ENCODE measurements at regions of chr2 and their contacts with region 1.

Region 1: GRCh38 chr2:30165050-30165520 is 18.3 kb downstream of the YPEL5 start:
- DNase-seq: peak; percentile 93
- ATAC-seq: peak; percentile 96
- H3K4me3 ChIP-seq: no peak overlapping the region
- H3K27ac ChIP-seq: no peak overlapping the region
- H3K4me1 ChIP-seq: peaks cover 3% of the 10 kb centered on the region; the same call in 1 of the 2 replicates
- H3K27me3 ChIP-seq: no peaks in the 10 kb centered on the region
- CTCF ChIP-seq: peak; percentile 98
- POLR2A ChIP-seq: peak; percentile 43; the same call in 1 of the 2 replicates
- RAD21 ChIP-seq: peak; percentile 84

Region 2: DNA sequence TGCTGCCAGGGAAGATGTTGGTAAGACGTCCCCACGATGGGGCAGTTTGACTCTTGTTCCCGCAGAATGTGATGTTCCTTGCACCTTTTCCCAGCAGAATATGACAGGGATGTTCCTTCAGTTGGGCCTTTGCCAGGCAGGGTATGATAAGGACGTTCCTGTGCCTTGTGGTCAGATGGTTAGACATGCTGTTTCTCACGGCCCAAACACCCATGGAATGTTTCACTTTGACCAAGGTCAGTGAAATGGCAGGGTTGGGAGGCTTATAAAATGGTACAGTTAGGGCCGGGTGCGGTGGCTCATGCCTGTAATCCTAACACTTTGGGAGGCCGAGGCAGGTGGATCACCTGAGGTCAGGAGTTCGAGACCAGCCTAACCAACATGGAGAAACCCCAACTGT is 58.5 kb before region 1 on chr2:
- CTCF ChIA-PET with region 1: no interaction called
- POLR2A ChIA-PET with region 1: no interaction called
- dilution Hi-C with region 1: no loop called
- in situ Hi-C with region 1: no loop called
- intact Hi-C with region 1: no loop called
- DNase-seq: peak; percentile 47
- ATAC-seq: no peak
- H3K4me3 ChIP-seq: no peak overlapping the region
- H3K27ac ChIP-seq: no peak overlapping the region
- H3K4me1 ChIP-seq: peaks cover 3% of the 10 kb centered on the region; the same call in 1 of the 2 replicates
- H3K27me3 ChIP-seq: no peaks in the 10 kb centered on the region; the same call in 1 of the 2 replicates
- CTCF ChIP-seq: no peak
- POLR2A ChIP-seq: no peak
- RAD21 ChIP-seq: no peak

Region 3: DNA sequence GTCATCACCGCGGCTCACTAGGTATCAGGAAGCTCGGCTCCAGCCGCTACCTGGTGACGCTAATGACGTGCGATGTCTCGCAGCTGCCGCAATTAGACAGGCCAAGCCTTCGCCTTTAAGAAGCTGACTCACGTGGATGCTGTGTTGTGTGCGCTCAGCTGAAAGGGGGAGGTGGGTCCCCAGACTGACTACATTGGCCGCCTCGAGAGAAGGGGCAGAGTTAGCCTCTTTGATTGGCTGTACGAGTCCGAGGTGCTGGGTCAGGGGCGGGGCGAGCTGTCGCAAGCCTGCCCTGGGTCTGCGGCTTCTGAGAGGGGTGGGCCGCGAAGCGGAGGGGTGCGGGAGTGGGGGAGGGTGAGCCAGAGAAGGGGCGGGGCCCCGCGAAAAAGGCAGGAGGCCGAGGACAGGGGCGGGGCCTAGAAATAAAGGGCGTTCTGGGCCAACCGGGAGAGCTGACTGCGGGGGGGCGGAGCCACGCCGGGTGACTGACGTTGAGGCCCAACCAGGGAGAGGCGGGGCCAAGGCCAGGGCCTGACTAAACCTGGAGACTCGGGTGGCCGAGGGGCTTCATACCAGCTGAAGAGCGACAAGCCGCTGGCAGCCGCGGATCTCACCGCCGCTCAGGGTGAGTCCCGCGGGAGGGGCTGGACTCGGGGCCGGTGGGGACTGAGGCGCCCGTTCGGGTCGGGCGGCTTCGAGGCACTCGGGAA is 18.5 kb before region 1 on chr2 and contains the start of gene YPEL5:
- CTCF ChIA-PET with region 1: interaction called, 51 read pairs
- POLR2A ChIA-PET with region 1: no interaction called
- dilution Hi-C with region 1: no loop called
- in situ Hi-C with region 1: no loop called
- intact Hi-C with region 1: no loop called
- DNase-seq: peak; percentile 99
- ATAC-seq: peak; percentile 93
- H3K4me3 ChIP-seq: peak within 1 kb of the TSS; percentile 67
- H3K27ac ChIP-seq: peak within 1 kb of the TSS; percentile 91
- H3K4me1 ChIP-seq: peaks cover 7% of the 10 kb centered on the region
- H3K27me3 ChIP-seq: no peaks in the 10 kb centered on the region
- CTCF ChIP-seq: no peak
- POLR2A ChIP-seq: peak; percentile 96
- RAD21 ChIP-seq: no peak
- total RNA-seq, gene YPEL5: 40.7 and 54.7 TPM in 2 replicates

Region 4: GRCh38 chr2:30208452-30208851 is 43.4 kb after region 1 on chr2:
- CTCF ChIA-PET with region 1: interaction called, 14 read pairs
- POLR2A ChIA-PET with region 1: no interaction called
- dilution Hi-C with region 1: no loop called
- in situ Hi-C with region 1: no loop called
- intact Hi-C with region 1: no loop called
- DNase-seq: peak; percentile 82
- ATAC-seq: peak; percentile 99
- H3K4me3 ChIP-seq: no peak overlapping the region
- H3K27ac ChIP-seq: no peak overlapping the region
- H3K4me1 ChIP-seq: peaks cover 2% of the 10 kb centered on the region; the same call in 1 of the 2 replicates
- H3K27me3 ChIP-seq: 0 out of 2 replicates have a peak, but pooled peaks cover 3% of the 10 kb centered on the region
- CTCF ChIP-seq: peak; percentile 95
- POLR2A ChIP-seq: peak; percentile 63
- RAD21 ChIP-seq: peak; percentile 98

Region 5: GRCh38 chr2:30691948-30692828 is 527.1 kb after region 1 on chr2:
- CTCF ChIA-PET with region 1: interaction called, 11 read pairs
- POLR2A ChIA-PET with region 1: no interaction called
- dilution Hi-C with region 1: no loop called
- in situ Hi-C with region 1: no loop called
- intact Hi-C with region 1: no loop called
- DNase-seq: peak; percentile 37
- ATAC-seq: peak; percentile 84
- H3K4me3 ChIP-seq: no peak overlapping the region
- H3K27ac ChIP-seq: no peak overlapping the region
- H3K4me1 ChIP-seq: peaks cover 18% of the 10 kb centered on the region
- H3K27me3 ChIP-seq: no peaks in the 10 kb centered on the region
- CTCF ChIP-seq: peak; percentile 42; the same call in 1 of the 2 replicates
- POLR2A ChIP-seq: no peak
- RAD21 ChIP-seq: peak; percentile 48

Region 6: DNA sequence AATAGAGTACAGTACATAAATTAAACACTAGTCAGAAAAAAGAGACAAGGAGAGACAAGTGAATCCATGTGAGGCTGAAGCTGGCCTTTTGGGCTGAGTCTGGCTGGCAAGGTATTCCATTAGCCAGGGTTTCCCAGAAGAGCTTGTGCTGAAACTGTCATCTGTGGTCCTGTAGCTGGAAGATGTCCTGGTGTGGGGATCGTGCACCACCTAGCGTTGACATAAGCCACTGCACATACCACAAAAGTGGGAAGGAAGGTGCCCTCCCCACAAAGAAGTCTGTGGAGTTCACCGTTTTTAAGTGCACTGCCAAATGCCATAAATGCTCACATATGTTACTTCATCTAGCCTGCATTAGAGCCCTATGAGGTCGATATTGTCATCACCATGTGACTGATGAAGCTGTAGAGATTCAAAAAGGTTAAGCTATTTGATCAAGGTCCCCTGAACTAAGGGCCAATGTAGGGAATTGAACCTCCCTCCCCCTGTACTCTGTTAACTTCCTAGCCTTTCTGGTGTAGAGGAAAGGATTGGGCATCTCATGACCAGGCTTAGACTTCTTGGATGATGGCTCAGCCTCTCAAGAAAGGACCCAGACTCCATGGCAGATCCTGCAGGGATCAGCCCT is 1005.1 kb after region 1 on chr2:
- CTCF ChIA-PET with region 1: interaction called, 4 read pairs
- POLR2A ChIA-PET with region 1: no interaction called
- dilution Hi-C with region 1: no loop called
- in situ Hi-C with region 1: loop called (anchors 25 kb)
- intact Hi-C with region 1: loop called (anchors 10 kb)
- DNase-seq: peak; percentile 60
- ATAC-seq: peak; percentile 98
- H3K4me3 ChIP-seq: no peak overlapping the region
- H3K27ac ChIP-seq: no peak overlapping the region
- H3K4me1 ChIP-seq: no peaks in the 10 kb centered on the region
- H3K27me3 ChIP-seq: peaks cover 9% of the 10 kb centered on the region; the same call in 1 of the 2 replicates
- CTCF ChIP-seq: peak; percentile 83
- POLR2A ChIP-seq: no peak
- RAD21 ChIP-seq: peak; percentile 80